HepG2 (cell line): ENCODE measurements at regions of chr2 and their contacts with region 1.

Region 1: DNA sequence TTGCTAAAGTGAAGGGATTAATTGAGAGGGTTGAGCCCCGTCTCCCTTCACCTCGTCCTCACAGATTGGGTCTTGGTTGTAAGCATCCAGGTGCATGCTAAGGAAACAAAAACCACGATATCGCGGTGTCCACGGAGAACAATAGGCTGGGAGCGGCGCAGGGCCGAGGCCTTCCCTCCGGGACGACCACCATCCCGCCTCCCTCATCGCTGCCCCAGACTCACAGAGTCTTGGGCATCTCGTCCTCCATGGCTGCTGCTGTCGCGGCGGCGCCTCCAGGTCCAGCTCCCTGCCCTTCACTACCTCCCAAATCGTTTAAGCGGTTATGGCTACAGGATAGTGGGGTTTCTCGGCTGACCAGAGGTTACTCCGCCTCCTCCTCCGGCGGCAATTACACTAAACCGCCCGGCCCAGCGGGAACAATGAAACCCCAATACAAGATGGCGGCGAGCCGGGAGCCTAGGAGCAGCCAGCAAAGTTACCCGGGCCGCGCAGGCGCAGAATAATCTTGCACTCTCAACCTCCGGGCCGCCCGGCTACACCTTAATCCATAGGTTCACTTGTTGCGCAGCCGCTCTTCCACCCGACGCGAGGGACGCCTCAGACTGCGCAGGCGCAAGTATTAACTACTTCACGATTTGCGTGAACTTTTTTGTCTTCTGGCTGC is at the start of gene TIA1:
- DNase-seq: peak; percentile 99
- ATAC-seq: peak; percentile 93
- H3K4me3 ChIP-seq: peak within 1 kb of the TSS; percentile 96 to 98 (median 98)
- H3K27ac ChIP-seq: peak within 1 kb of the TSS; percentile 98
- H3K4me1 ChIP-seq: peaks cover 47% of the 10 kb centered on the region
- H3K27me3 ChIP-seq: no peaks in the 10 kb centered on the region; a peak in 1 of 5 replicates
- CTCF ChIP-seq: no peak
- EP300 ChIP-seq: peak in 1 of 2 experiments; percentile 54; a peak in 1 of 4 replicates
- POLR2A ChIP-seq: peak; percentile 92 to 98
- RAD21 ChIP-seq: peak; percentile 37; the same call in 1 of the 2 replicates
- total RNA-seq, gene TIA1: 199 and 209 TPM in 2 replicates

Region 2: DNA sequence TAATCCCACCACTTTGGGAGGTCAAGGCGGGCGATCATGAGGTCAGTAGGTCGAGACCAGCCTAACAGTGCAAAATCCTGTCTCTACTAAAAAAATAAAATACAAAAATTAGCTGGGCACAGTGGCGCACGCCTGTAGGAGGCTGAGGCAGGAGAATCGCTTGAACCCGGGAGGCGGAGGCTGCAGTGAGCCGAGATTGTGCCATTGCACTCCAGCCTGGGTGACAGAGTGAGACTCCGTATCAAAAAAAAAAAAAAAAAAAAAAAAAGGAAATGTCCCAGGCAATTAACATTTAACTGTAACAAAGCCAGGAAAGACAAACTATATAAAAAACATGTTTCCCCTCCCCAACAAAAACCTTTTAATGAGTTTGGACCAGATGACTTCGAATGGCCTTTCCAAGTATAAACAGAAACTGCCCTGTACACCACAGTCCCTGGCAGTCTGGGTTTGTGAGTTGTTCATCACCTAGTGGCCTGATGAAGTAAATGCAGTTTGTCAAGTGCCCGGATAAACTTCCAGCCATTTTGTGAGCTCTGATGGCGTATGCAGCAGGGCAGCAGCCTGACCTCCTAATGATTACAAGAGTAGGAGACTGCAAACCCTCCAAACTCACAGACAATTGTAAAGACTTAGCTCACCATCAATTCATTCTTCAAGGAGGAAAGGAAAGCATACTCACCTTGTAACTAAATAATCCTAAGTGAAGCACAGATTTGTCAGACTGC is 177.6 kb before region 1 on chr2:
- CTCF ChIA-PET with region 1: no interaction called
- POLR2A ChIA-PET with region 1: no interaction called
- in situ Hi-C with region 1: no loop called
- intact Hi-C with region 1: no loop called
- DNase-seq: peak; percentile 87
- ATAC-seq: peak; percentile 90
- H3K4me3 ChIP-seq: no peak overlapping the region
- H3K27ac ChIP-seq: peak overlapping the region; percentile 41
- H3K4me1 ChIP-seq: peaks cover 36% of the 10 kb centered on the region
- H3K27me3 ChIP-seq: no peaks in the 10 kb centered on the region
- CTCF ChIP-seq: peak; percentile 91
- EP300 ChIP-seq: no peak
- POLR2A ChIP-seq: no peak
- RAD21 ChIP-seq: peak; percentile 85

Region 3: GRCh38 chr2:70086838-70087701 is 161.2 kb before region 1 on chr2 and contains the start of gene PCBP1:
- CTCF ChIA-PET with region 1: no interaction called
- POLR2A ChIA-PET with region 1: interaction called, 3 read pairs
- in situ Hi-C with region 1: no loop called
- intact Hi-C with region 1: loop called (anchors 5 kb)
- DNase-seq: peak; percentile 94
- ATAC-seq: peak; percentile 49
- H3K4me3 ChIP-seq: peak within 1 kb of the TSS; percentile 93 to 95 (median 95)
- H3K27ac ChIP-seq: peak within 1 kb of the TSS; percentile 99
- H3K4me1 ChIP-seq: peaks cover 56% of the 10 kb centered on the region
- H3K27me3 ChIP-seq: no peaks in the 10 kb centered on the region; a peak in 1 of 5 replicates
- CTCF ChIP-seq: no peak
- EP300 ChIP-seq: no peak; a peak in 2 of 4 replicates
- POLR2A ChIP-seq: peak; percentile 71 to 81
- RAD21 ChIP-seq: peak; percentile 50; the same call in 1 of the 2 replicates
- total RNA-seq, gene PCBP1: 32.0 and 104 TPM in 2 replicates

Region 4: GRCh38 chr2:70199326-70199864 is 48.9 kb before region 1 on chr2:
- CTCF ChIA-PET with region 1: no interaction called
- POLR2A ChIA-PET with region 1: no interaction called
- in situ Hi-C with region 1: no loop called
- intact Hi-C with region 1: no loop called
- DNase-seq: peak; percentile 36
- ATAC-seq: peak; percentile 6; the same call in 1 of the 3 replicates
- H3K4me3 ChIP-seq: no peak overlapping the region
- H3K27ac ChIP-seq: no peak overlapping the region
- H3K4me1 ChIP-seq: peaks cover 5% of the 10 kb centered on the region; the same call in 1 of the 2 replicates
- H3K27me3 ChIP-seq: no peaks in the 10 kb centered on the region
- CTCF ChIP-seq: peak; percentile 33
- EP300 ChIP-seq: no peak
- POLR2A ChIP-seq: no peak
- RAD21 ChIP-seq: no peak

Region 5: GRCh38 chr2:70258532-70258874 is 10.2 kb after region 1 on chr2:
- CTCF ChIA-PET with region 1: no interaction called
- POLR2A ChIA-PET with region 1: interaction called, 49 read pairs
- in situ Hi-C with region 1: no loop called
- intact Hi-C with region 1: no loop called
- DNase-seq: peak; percentile 41
- ATAC-seq: peak; percentile 70
- H3K4me3 ChIP-seq: peak overlapping the region; percentile 83 to 90 (median 83)
- H3K27ac ChIP-seq: peak overlapping the region; percentile 82
- H3K4me1 ChIP-seq: peaks cover 44% of the 10 kb centered on the region
- H3K27me3 ChIP-seq: no peaks in the 10 kb centered on the region; a peak in 1 of 5 replicates
- CTCF ChIP-seq: no peak
- EP300 ChIP-seq: no peak
- POLR2A ChIP-seq: no peak
- RAD21 ChIP-seq: no peak

Region 6: GRCh38 chr2:70357684-70358071 is 109.4 kb after region 1 on chr2:
- CTCF ChIA-PET with region 1: no interaction called
- POLR2A ChIA-PET with region 1: no interaction called
- in situ Hi-C with region 1: no loop called
- intact Hi-C with region 1: no loop called
- DNase-seq: peak; percentile 14
- ATAC-seq: no peak
- H3K4me3 ChIP-seq: no peak overlapping the region
- H3K27ac ChIP-seq: no peak overlapping the region
- H3K4me1 ChIP-seq: peaks cover 8% of the 10 kb centered on the region; the same call in 1 of the 2 replicates
- H3K27me3 ChIP-seq: peaks cover 0 to 2% of the 10 kb centered on the region in 2 experiments; a peak in 1 of 5 replicates
- CTCF ChIP-seq: no peak
- EP300 ChIP-seq: no peak
- POLR2A ChIP-seq: no peak
- RAD21 ChIP-seq: no peak